ENCODE measurements at regions of chr10 and their contacts with region 1.

Region 1: DNA sequence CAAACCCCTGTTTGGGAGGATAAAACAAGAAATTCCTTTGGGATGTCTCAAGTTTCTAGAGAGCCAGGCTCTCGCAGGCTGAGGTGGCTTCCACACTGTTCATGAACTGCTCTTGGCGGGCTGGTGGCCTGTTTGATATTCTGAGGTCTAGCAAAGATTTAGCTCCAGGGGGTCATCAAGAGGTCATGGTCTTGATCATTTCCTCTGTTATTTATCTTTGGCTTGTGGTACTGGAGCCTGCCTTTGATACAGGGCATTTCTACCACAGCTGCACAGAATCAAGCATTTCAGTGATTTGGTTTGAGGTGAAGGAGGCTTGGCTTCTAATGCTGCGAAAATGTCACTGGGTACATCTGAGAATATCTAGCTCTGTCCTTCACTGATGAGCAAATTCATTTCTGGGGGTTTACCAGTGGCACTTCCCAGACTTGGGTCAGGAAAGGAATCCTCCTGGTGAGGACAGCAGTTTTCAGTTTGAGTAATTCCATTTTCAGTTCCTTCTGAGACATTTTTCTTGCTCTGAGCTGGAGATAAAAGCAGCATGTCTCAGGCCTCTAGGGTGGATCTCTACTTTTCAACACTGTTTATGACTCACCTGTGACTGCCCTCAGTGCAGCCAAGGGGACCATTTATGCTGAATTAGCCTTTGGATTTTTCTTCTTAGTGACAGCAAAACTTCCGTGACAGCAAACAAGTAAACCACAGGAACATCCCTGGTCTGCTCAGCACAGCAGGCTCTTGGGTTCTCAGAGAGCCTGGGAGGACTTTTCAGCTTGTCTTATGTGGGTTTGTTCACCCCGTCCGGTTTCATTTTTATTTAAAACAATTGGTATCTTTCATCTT is 312.0 kb downstream of the RNLS start:
- DNase-seq: peak; percentile 63
- H3K4me3 Mint-ChIP-seq: peak overlapping the region; percentile 36
- H3K27ac Mint-ChIP-seq: peak overlapping the region; percentile 86
- H3K4me1 Mint-ChIP-seq: peaks cover 59% of the 10 kb centered on the region
- H3K27me3 Mint-ChIP-seq: peaks cover 3% of the 10 kb centered on the region

Region 2: GRCh38 chr10:87931836-87932230 is 339.3 kb before region 1 on chr10:
- intact Hi-C with region 1: loop called (anchors 2 kb)
- DNase-seq: no peak
- H3K4me3 Mint-ChIP-seq: no peak overlapping the region
- H3K27ac Mint-ChIP-seq: no peak overlapping the region
- H3K4me1 Mint-ChIP-seq: peaks cover 46% of the 10 kb centered on the region
- H3K27me3 Mint-ChIP-seq: no peaks in the 10 kb centered on the region

Region 3: DNA sequence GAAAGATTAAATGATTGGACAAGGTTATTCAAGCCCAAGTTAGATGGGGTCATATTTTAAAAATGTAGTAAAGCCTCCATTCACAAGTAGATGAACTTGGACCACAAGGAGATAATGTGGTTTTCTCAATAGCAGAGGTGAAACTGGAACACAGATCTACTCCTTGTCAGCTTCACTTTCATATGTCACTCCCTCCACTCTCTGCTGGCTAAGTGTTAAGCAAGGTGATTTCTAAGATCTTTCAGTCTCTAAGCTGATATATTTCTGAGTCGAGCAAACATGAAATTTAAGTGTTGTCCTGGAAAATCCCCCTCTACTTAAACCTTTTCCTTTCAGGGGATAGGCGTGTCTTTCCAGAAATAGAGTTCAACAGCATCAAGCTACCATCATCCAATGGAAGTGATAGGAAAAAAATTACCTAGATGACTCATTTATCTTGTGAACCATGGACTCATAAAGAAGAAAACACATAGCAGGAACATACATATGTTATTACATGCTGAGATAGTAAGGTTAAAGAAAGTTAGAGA is 132.7 kb before region 1 on chr10:
- intact Hi-C with region 1: loop called (anchors 1 kb)
- DNase-seq: no peak
- H3K4me3 Mint-ChIP-seq: peak overlapping the region; percentile 59
- H3K27ac Mint-ChIP-seq: peak overlapping the region; percentile 76
- H3K4me1 Mint-ChIP-seq: peaks cover 29% of the 10 kb centered on the region
- H3K27me3 Mint-ChIP-seq: peaks cover 8% of the 10 kb centered on the region

Region 4: DNA sequence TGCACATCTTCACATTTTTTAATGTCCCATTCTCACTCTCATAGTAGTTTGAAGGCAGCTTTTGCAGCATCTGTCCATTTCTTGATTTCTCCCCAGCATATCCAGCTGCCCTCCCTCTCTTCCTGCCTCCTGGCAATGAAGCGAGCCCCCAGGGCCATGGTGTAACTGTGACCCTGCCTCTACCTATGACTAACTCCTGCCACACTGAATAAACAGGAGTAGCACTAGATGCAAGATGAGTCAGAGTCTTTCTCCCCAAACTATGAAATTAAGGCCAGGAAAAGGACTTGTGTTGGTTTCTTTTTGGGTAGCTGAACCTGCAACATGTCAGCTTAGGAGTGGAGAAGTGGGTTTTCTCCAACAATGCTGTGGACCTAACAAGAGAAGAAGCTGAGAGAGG is 17.0 kb before region 1 on chr10:
- intact Hi-C with region 1: loop called (anchors 1 kb)
- DNase-seq: no peak
- H3K4me3 Mint-ChIP-seq: no peak overlapping the region
- H3K27ac Mint-ChIP-seq: peak overlapping the region; percentile 56
- H3K4me1 Mint-ChIP-seq: peaks cover 26% of the 10 kb centered on the region
- H3K27me3 Mint-ChIP-seq: no peaks in the 10 kb centered on the region

Region 5: DNA sequence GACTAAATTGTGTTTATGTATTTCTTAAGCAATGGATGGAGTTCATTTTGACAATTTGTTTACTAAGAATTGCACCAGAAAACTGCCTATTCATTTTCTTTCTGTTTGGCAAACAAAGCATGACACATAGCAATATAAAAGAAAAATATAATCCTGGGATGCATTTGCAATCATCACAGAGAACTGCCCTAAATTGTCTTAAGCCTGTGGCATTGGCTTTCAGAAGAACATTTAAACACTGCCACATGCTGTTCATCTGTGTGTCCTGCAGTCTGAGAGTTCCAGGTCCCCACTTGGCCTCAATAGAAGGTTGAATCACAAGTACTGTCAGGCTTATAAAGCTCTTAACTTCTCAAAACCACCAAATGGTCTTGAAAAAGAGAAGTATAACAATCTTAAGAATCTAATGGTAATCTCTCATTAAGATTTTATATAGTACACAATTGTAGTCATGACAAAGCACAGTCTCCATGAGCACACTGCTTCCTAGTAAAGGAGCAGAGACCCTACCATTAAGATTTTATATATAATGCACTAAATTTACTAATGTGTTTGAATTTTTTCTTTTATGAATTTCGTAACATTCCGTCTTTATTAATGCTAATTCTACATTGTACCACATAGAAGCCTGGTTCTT is 282.1 kb after region 1 on chr10:
- intact Hi-C with region 1: loop called (anchors 1 kb)
- DNase-seq: peak; percentile 14
- H3K4me3 Mint-ChIP-seq: no peak overlapping the region
- H3K27ac Mint-ChIP-seq: no peak overlapping the region
- H3K4me1 Mint-ChIP-seq: peaks cover 6% of the 10 kb centered on the region
- H3K27me3 Mint-ChIP-seq: peaks cover 3% of the 10 kb centered on the region

Region 6: GRCh38 chr10:89079961-89080360 is 808.9 kb after region 1 on chr10:
- intact Hi-C with region 1: loop called (anchors 5 kb)
- DNase-seq: no peak
- H3K4me3 Mint-ChIP-seq: no peak overlapping the region
- H3K27ac Mint-ChIP-seq: no peak overlapping the region
- H3K4me1 Mint-ChIP-seq: peaks cover 10% of the 10 kb centered on the region
- H3K27me3 Mint-ChIP-seq: peaks cover 6% of the 10 kb centered on the region